ENCODE measurements at regions of chr12 and their contacts with region 1.

Region 1: DNA sequence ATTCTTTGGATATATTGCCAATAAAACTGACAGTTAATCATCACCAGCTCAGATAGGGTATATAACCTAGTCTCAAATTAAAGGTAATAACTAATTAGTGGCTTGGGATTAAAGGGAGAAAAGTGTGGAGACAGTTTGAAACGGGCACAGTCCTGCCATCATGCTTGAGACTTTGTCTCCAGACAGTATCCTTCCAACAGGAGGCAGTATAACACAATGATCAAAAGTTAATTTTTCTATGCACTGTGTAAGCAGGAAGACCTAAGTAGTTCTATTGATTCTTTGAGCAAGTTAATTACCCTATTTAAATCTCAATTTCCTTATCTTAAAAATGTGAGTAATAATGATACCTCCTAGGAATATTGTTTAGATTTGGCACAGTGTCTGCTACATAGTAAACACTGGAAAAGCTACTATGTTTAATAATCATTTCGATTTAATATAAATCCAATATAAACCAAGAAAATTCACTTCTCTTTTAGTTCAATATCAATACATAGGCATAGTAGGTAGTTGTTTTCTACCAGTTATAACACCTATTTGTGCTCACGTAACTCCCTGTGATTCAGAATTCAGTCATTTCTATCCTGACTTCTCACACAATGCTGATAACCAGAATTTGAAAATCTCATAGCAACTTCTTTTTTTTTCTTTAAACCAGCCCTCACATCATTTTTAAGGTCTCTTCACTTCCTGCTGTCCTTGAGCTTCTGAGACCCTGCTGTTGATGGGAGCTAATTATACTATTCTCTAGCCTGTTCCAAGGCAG is 53.7 kb downstream of the GALNT4 start:
- DNase-seq: no peak

Region 2: GRCh38 chr12:89288959-89289358 is 182.0 kb before region 1 on chr12:
- intact Hi-C with region 1: no loop called
- DNase-seq: no peak

Region 3: DNA sequence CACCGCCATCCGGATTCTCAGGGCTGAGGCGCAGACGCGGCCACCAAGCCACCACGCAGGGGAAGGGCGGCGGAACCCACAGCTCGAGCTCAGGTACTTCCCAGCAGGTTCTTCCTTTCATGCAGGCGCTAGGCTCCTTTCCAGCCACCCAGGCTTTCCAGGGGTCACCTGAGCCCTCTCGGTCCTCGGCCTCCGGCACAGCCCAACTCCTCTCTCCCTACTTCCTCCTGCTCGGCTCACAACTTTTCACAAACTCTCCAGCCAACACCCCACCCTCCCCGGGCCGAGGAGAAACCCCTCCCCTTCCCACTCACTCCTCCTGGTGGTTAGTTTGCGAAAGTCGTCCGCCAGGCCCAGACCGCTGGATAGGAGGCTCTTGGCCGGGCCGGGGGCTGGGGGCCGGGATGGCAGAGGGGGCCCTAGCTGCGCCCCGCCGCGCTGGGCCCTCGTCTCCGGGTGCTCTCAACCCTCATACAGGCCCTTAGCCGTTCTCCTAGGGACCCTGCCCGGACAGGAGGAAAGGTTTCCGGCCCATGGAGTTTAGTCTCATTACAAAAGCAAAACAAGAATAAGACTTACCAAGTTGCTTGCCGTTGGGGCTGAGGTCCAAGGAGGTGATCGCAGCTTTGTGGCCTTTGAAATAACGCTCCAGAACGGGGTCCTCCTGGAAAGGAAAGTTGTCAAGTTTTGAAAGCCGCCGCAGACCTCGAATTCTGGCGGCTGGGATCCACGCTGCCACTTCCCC is 53.8 kb after region 1 on chr12 and contains the start of gene GALNT4:
- intact Hi-C with region 1: loop called (anchors 1 kb)
- DNase-seq: peak; percentile 58 to 96 (median 76)

Region 4: DNA sequence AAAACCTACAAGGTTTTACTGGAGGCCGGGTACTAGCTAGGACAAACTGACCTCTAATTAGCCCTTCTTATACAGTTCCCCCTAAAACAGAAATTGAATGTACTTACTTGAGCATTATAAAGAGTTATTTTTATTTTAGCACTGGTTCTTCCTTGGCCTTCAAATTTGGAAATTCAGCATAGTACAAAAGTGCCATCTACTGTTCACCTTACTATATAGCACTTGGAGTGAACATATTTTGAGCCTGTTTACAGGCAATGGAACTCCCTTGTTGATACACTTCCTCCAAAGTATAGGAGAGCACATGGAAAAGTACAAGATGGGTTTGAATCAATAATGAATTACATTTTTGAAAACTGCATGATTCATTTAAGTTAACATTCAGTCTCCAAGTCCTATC is 58.8 kb after region 1 on chr12:
- intact Hi-C with region 1: loop called (anchors 1 kb)
- DNase-seq: no peak

Region 5: GRCh38 chr12:89709157-89709994 is 238.5 kb after region 1 on chr12:
- intact Hi-C with region 1: loop called (anchors 5 kb)
- DNase-seq: peak; percentile 94 to 99 (median 97)

Measured in posterior cingulate gyrus (tissue), 11 donors.